Caco-2 (cell line): ENCODE measurements at regions of chr1 and their contacts with region 1.

Region 1: GRCh38 chr1:11272832-11273594 is at the start of gene UBIAD1:
- DNase-seq: peak; percentile 78 to 82
- H3K4me3 ChIP-seq: peak within 1 kb of the TSS; percentile 88
- H3K4me3 Mint-ChIP-seq: peak within 1 kb of the TSS; percentile 89
- H3K27ac Mint-ChIP-seq: peak within 1 kb of the TSS; percentile 85
- H3K4me1 ChIP-seq: peaks cover 4% of the 10 kb centered on the region; the same call in 1 of the 2 replicates
- H3K4me1 Mint-ChIP-seq: peaks cover 13% of the 10 kb centered on the region
- H3K27me3 ChIP-seq: no peaks in the 10 kb centered on the region
- H3K27me3 Mint-ChIP-seq: no peaks in the 10 kb centered on the region
- CTCF ChIP-seq: peak in 1 of 2 experiments; percentile 8
- total RNA-seq, gene UBIAD1: 13.9 and 17.0 TPM in 2 replicates

Region 2: DNA sequence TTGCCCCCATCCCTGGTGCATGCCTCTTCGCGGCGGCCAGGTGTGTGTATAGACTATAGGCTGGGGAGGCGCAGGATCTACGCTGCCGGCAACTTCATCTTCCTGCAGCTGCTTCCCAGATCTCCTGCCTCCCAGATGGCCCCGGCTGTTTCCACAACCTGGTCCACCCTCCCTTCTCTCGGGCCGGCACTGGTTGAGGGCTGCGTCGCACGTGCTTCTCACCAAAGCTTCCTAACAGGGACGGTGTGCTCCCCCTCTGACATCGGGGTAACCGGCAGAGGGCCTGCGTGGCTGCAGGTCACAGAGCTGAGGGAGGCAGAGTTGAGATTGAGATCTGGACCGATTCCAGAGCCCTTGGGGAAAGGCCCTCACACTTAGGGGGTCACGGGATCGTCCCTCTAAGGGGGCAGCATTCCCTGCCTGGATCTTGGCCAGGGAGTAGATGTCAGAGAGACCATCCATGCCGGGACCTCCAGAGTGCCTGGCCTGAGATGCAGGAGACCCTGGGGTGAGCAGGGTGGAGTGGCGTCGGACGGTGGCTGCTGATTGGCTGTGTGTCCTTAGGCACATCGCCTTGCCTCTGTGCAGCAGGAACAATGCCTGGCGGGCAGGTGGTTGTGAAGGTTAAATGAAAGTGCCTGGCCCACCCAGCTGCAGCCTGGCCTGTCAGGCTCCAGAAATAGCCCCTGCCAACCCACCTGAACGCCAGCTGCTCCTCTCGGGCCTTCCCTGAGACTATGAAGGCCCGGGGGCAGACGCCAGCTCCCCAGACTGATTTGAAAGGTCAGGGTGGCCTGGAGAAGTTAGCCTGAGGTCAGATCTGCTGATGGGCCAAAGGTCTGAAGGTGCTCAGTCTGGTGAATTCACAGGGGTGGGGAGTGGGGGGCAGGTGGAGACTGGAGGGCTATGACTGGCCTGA is 219.9 kb before region 1 on chr1:
- CTCF ChIA-PET with region 1: no interaction called
- POLR2A ChIA-PET with region 1: no interaction called
- intact Hi-C with region 1: no loop called
- DNase-seq: no peak
- H3K4me3 ChIP-seq: no peak overlapping the region
- H3K4me3 Mint-ChIP-seq: no peak overlapping the region
- H3K27ac Mint-ChIP-seq: no peak overlapping the region
- H3K4me1 ChIP-seq: no peaks in the 10 kb centered on the region
- H3K4me1 Mint-ChIP-seq: no peaks in the 10 kb centered on the region
- H3K27me3 ChIP-seq: no peaks in the 10 kb centered on the region
- H3K27me3 Mint-ChIP-seq: no peaks in the 10 kb centered on the region
- CTCF ChIP-seq: no peak

Region 3: DNA sequence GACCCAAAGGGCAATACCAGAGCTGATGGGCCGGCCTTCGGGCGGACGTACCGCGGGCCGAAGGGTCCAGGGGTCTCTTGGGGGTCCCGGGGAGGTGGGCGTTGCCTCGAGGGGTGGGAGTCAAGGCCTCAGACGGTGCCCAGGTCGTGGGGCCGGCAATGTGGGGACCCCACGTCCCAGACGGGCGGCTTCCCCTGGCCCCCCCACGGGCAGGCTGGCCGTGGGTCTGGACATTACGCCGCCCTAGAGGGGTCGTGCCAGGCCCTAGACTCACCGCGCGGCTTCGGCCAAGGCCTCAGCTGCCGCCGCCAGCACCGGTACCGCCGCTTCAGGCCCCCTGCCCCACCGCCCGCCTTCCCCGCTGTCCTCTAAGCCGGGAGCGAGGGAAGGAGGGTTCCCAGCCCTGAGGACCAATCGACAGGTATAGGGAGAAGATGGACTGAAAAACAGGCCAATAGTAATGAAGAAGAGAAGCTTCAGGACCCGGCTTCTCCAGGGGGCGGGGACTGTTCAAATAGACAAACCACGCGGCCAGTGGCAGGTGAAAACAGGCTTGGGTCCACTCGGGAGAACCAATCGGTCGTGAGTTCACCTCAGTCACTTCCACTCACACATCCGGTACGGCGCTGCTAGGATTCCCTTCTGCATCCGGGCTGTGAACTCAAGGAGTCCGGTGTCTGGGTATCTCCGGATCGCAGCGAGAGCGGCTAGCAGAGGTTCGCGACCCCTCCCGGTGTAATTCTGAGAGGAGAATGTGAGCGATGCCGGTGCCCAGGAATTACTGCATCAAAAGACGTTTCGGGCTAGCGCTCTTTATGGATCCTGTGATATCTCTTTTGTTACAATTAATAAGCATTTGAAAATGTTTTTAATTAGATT is 10.6 kb before region 1 on chr1 and contains the start of gene MTOR:
- CTCF ChIA-PET with region 1: interaction called, 6 read pairs
- POLR2A ChIA-PET with region 1: interaction called, 10 read pairs
- intact Hi-C with region 1: no loop called
- DNase-seq: peak; percentile 98 to 99
- H3K4me3 ChIP-seq: peak within 1 kb of the TSS; percentile 100
- H3K4me3 Mint-ChIP-seq: peak within 1 kb of the TSS; percentile 89
- H3K27ac Mint-ChIP-seq: peak within 1 kb of the TSS; percentile 74
- H3K4me1 ChIP-seq: no peaks in the 10 kb centered on the region
- H3K4me1 Mint-ChIP-seq: no peaks in the 10 kb centered on the region
- H3K27me3 ChIP-seq: no peaks in the 10 kb centered on the region
- H3K27me3 Mint-ChIP-seq: no peaks in the 10 kb centered on the region
- CTCF ChIP-seq: no peak
- total RNA-seq, gene MTOR: 41.4 and 45.7 TPM in 2 replicates